SK-N-SH (cell line): ENCODE measurements at regions of chr4 and their contacts with region 1.

Region 1: DNA sequence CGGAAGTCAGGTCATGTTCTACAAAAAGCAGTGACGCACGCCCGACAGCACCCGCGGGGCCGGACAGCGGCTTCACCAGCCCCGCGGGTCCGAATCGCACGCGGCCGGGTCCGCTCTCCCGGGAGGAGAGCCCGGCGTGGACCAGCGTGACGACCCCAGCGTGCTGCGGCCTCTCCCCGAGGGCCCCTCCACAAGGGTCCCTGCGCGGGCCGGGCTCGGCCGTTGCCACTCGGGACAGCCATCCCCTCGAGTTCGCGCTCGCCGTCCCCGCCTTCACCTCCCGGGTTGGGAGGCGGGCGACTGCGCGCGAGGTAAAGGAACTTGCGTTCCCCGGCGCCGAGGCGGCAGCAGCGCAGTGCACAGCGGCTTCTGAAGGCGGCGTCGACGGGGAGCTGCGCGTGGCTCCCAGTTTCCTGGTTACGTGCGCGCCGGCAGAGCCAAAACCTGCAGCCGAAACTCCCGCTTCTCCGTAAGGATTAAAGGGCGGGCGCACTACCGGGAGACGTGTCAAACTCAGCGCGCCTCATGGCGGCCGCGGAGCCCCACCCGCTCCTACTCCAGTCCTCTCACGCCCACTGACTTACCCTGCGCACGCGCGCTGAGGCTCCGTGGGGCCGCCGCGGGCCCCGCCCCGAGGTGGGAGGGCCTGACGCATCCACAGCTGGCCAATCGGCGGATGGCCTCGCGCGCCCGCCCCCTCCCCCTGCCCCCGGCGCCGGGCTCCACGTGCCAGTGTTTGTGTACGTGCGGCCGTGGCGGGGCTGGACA is 416 bp upstream of the LRP2BP start:
- DNase-seq: peak; percentile 99
- H3K4me3 ChIP-seq: peak overlapping the region; percentile 74 to 78
- H3K27ac ChIP-seq: peak overlapping the region; percentile 94 to 98
- H3K4me1 ChIP-seq: peaks cover 6 to 8% of the 10 kb centered on the region in 2 experiments; a peak in 3 of 4 replicates
- H3K27me3 ChIP-seq: no peaks in the 10 kb centered on the region
- CTCF ChIP-seq: no peak
- EP300 ChIP-seq: 0 out of 4 replicates have a peak, but pooled peaks of 1 of the 2 experiments have one; percentile 6
- RAD21 ChIP-seq: no peak

Region 2: DNA sequence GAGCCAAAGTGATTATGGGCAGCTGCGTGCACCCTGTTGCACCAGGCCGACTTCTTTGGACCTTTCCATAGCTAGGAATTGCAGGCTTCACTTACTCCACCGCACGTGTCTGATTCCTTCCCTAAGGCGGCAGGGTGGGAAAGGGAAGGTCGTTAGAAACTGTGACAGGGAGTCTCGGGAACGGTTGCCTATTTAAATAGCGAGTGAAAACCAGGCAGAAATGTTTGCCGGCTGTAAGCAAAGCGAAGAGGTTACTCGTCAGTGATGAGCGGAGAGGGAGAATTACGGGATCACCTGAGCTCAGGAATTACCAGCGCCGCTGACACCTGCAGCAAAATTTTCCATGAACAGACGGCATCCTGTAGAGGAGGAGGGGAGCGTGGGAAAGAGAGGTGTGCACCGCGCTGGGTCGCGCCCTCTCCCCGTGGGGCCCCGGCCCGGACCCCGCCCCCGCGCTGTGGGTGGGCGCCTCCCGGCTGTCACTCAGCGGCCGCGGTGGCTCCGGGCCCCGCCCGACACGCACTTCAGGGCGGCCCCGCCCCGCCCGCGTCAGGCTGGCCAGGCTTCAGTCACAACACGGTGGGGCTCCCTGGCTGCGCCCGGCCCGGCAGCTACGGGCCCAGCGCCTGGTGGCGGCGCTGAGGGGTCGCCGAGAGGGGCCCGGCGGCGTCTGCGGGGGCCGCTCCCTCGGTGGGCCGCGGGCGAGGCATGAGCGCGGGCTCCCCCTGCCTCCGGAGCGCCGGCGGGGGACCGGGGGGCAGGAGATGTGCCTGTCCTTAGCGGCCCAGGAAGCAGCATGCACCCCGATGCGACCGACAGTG is 186.9 kb before region 1 on chr4 and contains the start of gene SNX25:
- CTCF ChIA-PET with region 1: interaction called, 13 read pairs
- POLR2A ChIA-PET with region 1: interaction called, 5 read pairs
- DNase-seq: peak; percentile 94
- H3K4me3 ChIP-seq: peak within 1 kb of the TSS; percentile 78 to 85
- H3K27ac ChIP-seq: peak within 1 kb of the TSS; percentile 50 to 71; a peak in 3 of 4 replicates
- H3K4me1 ChIP-seq: peaks cover 0 to 11% of the 10 kb centered on the region in 2 experiments; a peak in 2 of 4 replicates
- H3K27me3 ChIP-seq: no peaks in the 10 kb centered on the region
- CTCF ChIP-seq: 0 out of 2 replicates have a peak, but pooled peaks have one; percentile 11
- EP300 ChIP-seq: no peak
- RAD21 ChIP-seq: peak; percentile 28
- polyA plus RNA-seq, gene SNX25: 8.5 and 11.4 TPM in 2 replicates

Region 3: DNA sequence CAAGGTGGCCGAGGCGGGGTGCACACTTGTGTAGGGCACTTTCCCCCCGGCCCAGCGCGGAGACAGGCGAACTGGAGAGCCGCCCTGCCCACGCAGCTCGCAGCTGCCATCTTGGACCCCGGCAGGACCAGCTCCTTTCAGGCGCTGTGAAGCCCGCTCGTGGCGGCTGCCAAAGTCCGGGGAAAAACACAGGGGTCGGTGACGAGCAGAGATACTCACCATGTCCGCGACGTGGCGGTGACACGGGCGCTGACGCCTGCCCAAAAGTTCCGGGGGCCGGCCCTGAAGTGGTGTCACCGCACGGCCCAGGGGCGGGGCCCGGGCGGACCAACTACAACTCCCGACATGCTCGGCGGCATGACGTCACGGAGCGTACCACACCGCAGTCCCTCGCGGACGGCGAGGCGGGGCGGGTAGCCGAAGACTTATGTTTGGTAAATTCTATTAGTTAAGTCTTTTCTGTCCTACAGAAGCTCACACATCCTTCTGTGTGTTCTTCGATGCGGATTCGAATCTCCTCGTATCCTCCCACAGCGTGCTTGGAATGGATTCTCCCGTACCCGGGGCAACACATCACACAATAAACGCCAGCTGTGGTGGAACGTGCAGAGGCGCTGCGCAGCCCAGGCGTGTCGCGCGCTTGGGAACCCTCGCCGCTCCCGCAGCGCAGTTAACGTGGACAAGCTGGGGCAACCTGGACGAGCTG is 29.7 kb after region 1 on chr4 and contains the start of gene UFSP2:
- CTCF ChIA-PET with region 1: interaction called, 3 read pairs
- POLR2A ChIA-PET with region 1: interaction called, 14 read pairs
- DNase-seq: peak; percentile 94
- H3K4me3 ChIP-seq: peak within 1 kb of the TSS; percentile 71 to 82
- H3K27ac ChIP-seq: peak within 1 kb of the TSS; percentile 88 to 95
- H3K4me1 ChIP-seq: peaks cover 0 to 8% of the 10 kb centered on the region in 2 experiments; a peak in 2 of 4 replicates
- H3K27me3 ChIP-seq: no peaks in the 10 kb centered on the region
- CTCF ChIP-seq: no peak
- EP300 ChIP-seq: peak in 1 of 2 experiments; percentile 45; a peak in 1 of 4 replicates
- RAD21 ChIP-seq: no peak
- polyA plus RNA-seq, gene UFSP2: 15.5 and 17.6 TPM in 2 replicates

Region 4: GRCh38 chr4:185534866-185535611 is 138.9 kb after region 1 on chr4 and contains the start of gene PDLIM3:
- CTCF ChIA-PET with region 1: no interaction called
- POLR2A ChIA-PET with region 1: no interaction called
- DNase-seq: peak; percentile 89
- H3K4me3 ChIP-seq: peak within 1 kb of the TSS; percentile 57 to 61
- H3K27ac ChIP-seq: no peak within 1 kb of the TSS; a peak in 1 of 4 replicates
- H3K4me1 ChIP-seq: peaks cover 0 to 8% of the 10 kb centered on the region in 2 experiments; a peak in 1 of 4 replicates
- H3K27me3 ChIP-seq: peaks cover 34% of the 10 kb centered on the region; the same call in 1 of the 2 replicates
- CTCF ChIP-seq: no peak
- EP300 ChIP-seq: no peak
- RAD21 ChIP-seq: no peak
- polyA plus RNA-seq, gene PDLIM3: 0.08 and 0.58 TPM in 2 replicates